ENCODE measurements at regions of chr6 and their contacts with region 1.

Region 1: GRCh38 chr6:110981202-110981600 is 637 bp upstream of the RPF2 start:
- DNase-seq: no peak
- H3K4me3 ChIP-seq: peak overlapping the region; percentile 66
- CTCF ChIP-seq: no peak

Region 2: DNA sequence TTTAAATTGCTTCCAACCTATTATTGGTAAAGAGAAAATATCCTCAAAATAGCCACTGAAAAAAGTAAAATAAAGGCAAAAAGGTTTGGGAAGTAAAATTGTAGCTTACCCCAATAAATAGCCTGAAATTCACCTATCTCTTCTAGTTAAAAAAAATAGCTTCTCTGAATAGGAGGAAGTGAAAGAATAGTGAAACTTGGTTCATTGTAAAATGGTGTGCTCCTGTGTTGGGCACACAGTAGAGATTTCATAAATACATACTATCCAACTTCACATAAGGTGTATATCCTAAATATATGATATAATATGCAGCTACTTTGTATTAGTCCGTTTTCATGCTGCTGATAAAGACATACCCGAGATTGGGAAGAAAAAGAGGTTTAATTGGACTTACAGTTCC is 211.3 kb before region 1 on chr6:
- in situ Hi-C with region 1: no loop called
- DNase-seq: no peak
- H3K4me3 ChIP-seq: no peak overlapping the region
- CTCF ChIP-seq: no peak

Region 3: GRCh38 chr6:110949679-110950285 is 31.4 kb before region 1 on chr6:
- in situ Hi-C with region 1: loop called (anchors 5 kb)
- DNase-seq: no peak
- H3K4me3 ChIP-seq: no peak overlapping the region
- CTCF ChIP-seq: no peak

Measured in astrocyte of the cerebellum (primary cell).